Activated CD4-positive, alpha-beta T cell treated with anti-CD3 and anti-CD28 coated beads for 36 hours (primary cell): ENCODE measurements at regions of chr1 and their contacts with region 1.

Region 1: GRCh38 chr1:44029906-44030604 is 1.2 kb downstream of the SLC6A9 start:
- DNase-seq: peak; percentile 94
- ATAC-seq: peak; percentile 83
- H3K4me3 Mint-ChIP-seq: peak overlapping the region; percentile 88
- H3K27ac Mint-ChIP-seq: peak overlapping the region; percentile 96
- H3K4me1 Mint-ChIP-seq: peaks cover 24% of the 10 kb centered on the region
- H3K27me3 Mint-ChIP-seq: no peaks in the 10 kb centered on the region

Region 2: GRCh38 chr1:42816585-42817434 is 1213.2 kb before region 1 on chr1 and contains the starts of genes ERMAP and SVBP:
- CTCF ChIA-PET with region 1: no interaction called
- POLR2A ChIA-PET with region 1: no interaction called
- intact Hi-C with region 1: loop called in 1 of 2 experiments (anchors 2 kb)
- DNase-seq: peak; percentile 98
- ATAC-seq: peak; percentile 90
- H3K4me3 Mint-ChIP-seq: peak within 1 kb of the TSS; percentile 77
- H3K27ac Mint-ChIP-seq: peak within 1 kb of the TSS; percentile 84
- H3K4me1 Mint-ChIP-seq: peaks cover 16% of the 10 kb centered on the region
- H3K27me3 Mint-ChIP-seq: peaks cover 2% of the 10 kb centered on the region
- total RNA-seq, gene ERMAP: 4.5 to 6.4 TPM
- total RNA-seq, gene SVBP: 14.5 to 14.6 TPM

Region 3: DNA sequence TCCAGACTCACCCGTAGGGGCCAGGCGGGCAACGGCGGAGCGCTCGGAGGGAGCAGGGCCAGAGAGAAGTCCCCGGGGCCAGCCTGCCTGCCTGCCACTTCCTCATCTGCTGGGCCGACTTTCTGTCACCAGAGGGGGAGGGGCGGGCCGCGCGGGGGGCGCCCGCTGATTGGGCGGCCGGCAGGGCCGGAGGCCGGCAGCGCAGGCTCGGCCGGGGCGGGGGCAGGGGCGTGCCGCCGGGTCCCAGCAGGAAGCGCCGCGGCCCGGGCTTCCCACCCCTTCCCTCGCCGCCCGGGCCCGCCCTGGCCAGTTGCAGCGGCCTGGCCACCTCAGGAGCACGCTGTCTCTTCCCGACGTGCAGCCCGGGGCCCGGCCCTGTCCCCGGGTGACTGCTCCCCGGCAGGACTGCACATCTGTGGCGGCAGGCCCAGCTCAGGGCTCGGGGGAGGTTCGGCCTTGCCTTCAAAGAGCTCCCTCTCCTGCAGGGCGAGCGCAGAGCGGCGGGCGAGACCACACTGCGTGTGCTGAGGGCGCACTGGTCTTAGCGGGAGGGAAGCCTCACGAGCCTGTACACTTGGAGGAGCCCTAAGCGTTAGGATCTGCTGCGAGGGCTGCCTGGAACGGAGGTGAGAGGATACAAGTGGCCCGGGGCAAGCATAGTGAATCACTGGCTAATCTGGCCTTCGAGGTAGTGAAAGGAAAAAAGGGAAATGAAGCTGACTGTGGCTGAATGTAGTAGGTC is 662.0 kb before region 1 on chr1 and contains the start of gene ELOVL1:
- CTCF ChIA-PET with region 1: no interaction called
- POLR2A ChIA-PET with region 1: no interaction called
- intact Hi-C with region 1: loop called in 1 of 2 experiments (anchors 10 kb)
- DNase-seq: peak; percentile 94
- ATAC-seq: peak; percentile 83
- H3K4me3 Mint-ChIP-seq: peak within 1 kb of the TSS; percentile 90
- H3K27ac Mint-ChIP-seq: peak within 1 kb of the TSS; percentile 93
- H3K4me1 Mint-ChIP-seq: peaks cover 30% of the 10 kb centered on the region
- H3K27me3 Mint-ChIP-seq: no peaks in the 10 kb centered on the region
- total RNA-seq, gene ELOVL1: 56.0 to 72.1 TPM

Region 4: DNA sequence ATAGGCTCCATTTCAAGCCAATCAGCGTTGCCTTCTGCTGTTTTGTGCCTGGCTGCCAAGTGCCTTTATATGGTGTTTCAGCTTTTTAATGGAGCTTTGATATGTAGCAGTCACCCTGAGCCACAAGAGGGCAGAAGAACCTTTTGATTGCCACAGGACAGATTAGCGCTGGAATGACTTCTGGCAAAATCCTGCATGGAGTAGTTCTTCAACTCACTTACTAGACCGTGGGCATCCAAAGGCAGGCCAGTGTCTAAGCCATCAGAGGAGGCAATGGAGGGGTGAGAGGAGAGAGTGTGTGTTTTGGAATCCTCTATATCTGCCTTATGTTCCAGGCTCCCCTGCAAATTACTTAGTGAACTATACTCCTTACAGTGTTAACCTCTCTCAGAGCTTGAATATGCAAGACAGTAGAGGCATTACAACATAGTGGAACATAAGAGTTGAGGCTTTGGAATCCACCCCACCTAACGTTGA is 266.5 kb before region 1 on chr1:
- CTCF ChIA-PET with region 1: no interaction called
- POLR2A ChIA-PET with region 1: no interaction called
- intact Hi-C with region 1: loop called in 1 of 2 experiments (anchors 10 kb)
- DNase-seq: peak; percentile 59
- ATAC-seq: peak; percentile 90
- H3K4me3 Mint-ChIP-seq: no peak overlapping the region
- H3K27ac Mint-ChIP-seq: no peak overlapping the region
- H3K4me1 Mint-ChIP-seq: no peaks in the 10 kb centered on the region
- H3K27me3 Mint-ChIP-seq: no peaks in the 10 kb centered on the region

Region 5: GRCh38 chr1:43979528-43980254 is 50.4 kb before region 1 on chr1:
- CTCF ChIA-PET with region 1: no interaction called
- POLR2A ChIA-PET with region 1: interaction called, 5 read pairs
- intact Hi-C with region 1: loop called in 1 of 2 experiments (anchors 1 kb)
- DNase-seq: peak; percentile 52
- ATAC-seq: peak; percentile 31
- H3K4me3 Mint-ChIP-seq: peak overlapping the region; percentile 84
- H3K27ac Mint-ChIP-seq: peak overlapping the region; percentile 76
- H3K4me1 Mint-ChIP-seq: peaks cover 36% of the 10 kb centered on the region
- H3K27me3 Mint-ChIP-seq: peaks cover 5% of the 10 kb centered on the region

Region 6: GRCh38 chr1:44213222-44214112 is 183.4 kb after region 1 on chr1 and contains the start of gene DMAP1:
- CTCF ChIA-PET with region 1: no interaction called
- POLR2A ChIA-PET with region 1: no interaction called
- intact Hi-C with region 1: loop called in 1 of 2 experiments (anchors 1 kb)
- DNase-seq: peak; percentile 91
- ATAC-seq: peak; percentile 92
- H3K4me3 Mint-ChIP-seq: peak within 1 kb of the TSS; percentile 94
- H3K27ac Mint-ChIP-seq: peak within 1 kb of the TSS; percentile 93
- H3K4me1 Mint-ChIP-seq: peaks cover 33% of the 10 kb centered on the region
- H3K27me3 Mint-ChIP-seq: no peaks in the 10 kb centered on the region
- total RNA-seq, gene DMAP1: 30.2 to 34.8 TPM

Region 7: GRCh38 chr1:44631647-44632539 is 601.8 kb after region 1 on chr1:
- CTCF ChIA-PET with region 1: no interaction called
- POLR2A ChIA-PET with region 1: no interaction called
- intact Hi-C with region 1: loop called in 1 of 2 experiments (anchors 1 kb)
- DNase-seq: peak; percentile 95
- ATAC-seq: peak; percentile 81
- H3K4me3 Mint-ChIP-seq: peak overlapping the region; percentile 86
- H3K27ac Mint-ChIP-seq: peak overlapping the region; percentile 97
- H3K4me1 Mint-ChIP-seq: peaks cover 40% of the 10 kb centered on the region
- H3K27me3 Mint-ChIP-seq: no peaks in the 10 kb centered on the region